Activated CD4-positive, alpha-beta memory T cell treated with anti-CD3 and anti-CD28 coated beads for 36 hours (primary cell): ENCODE measurements at regions of chr1 and their contacts with region 1.

Region 1: GRCh38 chr1:164628772-164629171 is 69.8 kb downstream of the PBX1 start:
- DNase-seq: no peak
- H3K4me3 Mint-ChIP-seq: no peak overlapping the region
- H3K27ac Mint-ChIP-seq: no peak overlapping the region
- H3K4me1 Mint-ChIP-seq: no peaks in the 10 kb centered on the region
- H3K27me3 Mint-ChIP-seq: no peaks in the 10 kb centered on the region

Region 2: DNA sequence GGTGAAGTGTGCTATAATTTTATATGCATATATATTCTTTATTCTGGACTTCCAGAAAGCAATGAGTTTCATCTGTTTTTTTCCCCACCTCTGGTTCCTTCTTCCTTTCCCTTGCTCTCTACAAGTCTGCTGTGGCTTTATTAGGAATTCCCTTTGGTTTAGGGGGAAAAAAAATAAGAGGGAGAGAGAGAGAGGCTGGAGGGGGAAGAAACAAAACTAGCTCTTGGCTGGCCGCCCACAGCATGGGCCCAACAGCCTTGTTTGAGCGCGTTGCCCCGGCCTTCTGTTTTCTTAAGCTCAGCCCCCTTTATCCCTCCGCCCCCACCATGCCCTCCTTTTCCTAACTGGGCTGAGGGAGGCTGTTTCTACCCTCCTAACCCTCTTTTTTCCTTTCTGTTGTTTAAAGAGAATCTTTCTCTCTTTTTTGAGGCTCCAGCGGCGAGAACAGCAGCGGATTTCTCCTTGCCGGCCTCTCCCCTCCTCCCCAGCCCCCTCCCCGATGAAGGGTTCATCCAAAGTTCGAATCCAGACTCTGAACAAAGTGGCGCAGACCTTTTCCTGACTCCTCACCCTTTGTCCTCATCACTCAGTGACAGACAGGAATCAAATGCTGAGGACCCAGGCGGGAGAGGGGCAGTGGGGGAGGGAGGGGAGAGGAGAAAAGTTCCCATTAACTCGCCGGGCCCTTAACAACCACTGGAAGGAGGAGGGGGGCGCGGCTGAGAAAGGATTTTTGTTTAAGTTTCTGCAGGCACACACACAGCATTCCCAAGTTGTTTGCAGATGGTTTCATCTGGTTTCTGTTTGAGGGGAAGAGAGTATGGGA is 40.0 kb before region 1 on chr1:
- CTCF ChIA-PET with region 1: no interaction called
- POLR2A ChIA-PET with region 1: no interaction called
- intact Hi-C with region 1: no loop called
- DNase-seq: no peak
- H3K4me3 Mint-ChIP-seq: no peak overlapping the region
- H3K27ac Mint-ChIP-seq: no peak overlapping the region
- H3K4me1 Mint-ChIP-seq: no peaks in the 10 kb centered on the region
- H3K27me3 Mint-ChIP-seq: no peaks in the 10 kb centered on the region

Region 3: DNA sequence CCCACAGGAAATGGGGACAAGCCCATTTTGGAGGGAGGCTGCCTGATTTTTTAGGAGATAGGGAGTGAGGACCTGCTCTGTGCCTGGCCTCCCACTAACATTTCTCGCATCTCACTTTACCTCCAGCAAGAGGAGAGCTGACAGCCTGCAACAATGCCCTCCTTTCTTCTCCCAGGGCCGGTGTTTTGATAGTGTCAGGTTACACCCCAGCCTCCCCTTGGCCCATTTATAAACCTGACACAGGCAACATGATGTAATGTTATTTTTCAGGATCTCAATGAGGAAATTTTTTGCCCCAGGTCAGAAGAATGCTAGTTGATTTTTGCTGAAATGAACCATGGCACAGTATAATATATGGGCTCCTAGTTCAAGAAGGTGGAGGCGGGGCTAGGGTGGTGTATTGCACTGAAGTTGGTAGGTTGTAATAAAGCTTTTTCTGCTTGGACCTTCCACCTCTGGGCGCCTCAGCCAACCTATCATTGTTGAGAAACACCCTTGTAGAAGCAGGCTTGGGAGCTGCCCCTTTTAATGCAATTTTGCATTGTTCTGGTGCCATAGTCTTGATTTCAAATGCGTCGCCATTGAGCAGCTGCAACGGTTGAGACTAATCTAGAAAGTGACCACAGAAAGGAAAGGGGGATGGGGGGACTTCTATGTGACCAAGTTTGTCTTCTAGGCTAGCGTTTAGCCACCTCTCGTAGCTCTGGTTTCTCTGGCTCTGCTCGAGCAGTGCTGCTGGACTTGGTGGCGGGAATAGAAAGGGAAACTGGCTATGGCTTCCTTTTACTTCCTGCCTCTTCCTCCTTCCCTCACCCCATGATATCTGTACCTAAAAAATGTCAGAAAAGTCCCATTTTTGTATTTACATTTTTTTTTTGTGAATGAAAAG is 16.8 kb before region 1 on chr1:
- CTCF ChIA-PET with region 1: no interaction called
- POLR2A ChIA-PET with region 1: no interaction called
- intact Hi-C with region 1: loop called (anchors 1 kb)
- DNase-seq: no peak
- H3K4me3 Mint-ChIP-seq: no peak overlapping the region
- H3K27ac Mint-ChIP-seq: no peak overlapping the region
- H3K4me1 Mint-ChIP-seq: no peaks in the 10 kb centered on the region
- H3K27me3 Mint-ChIP-seq: no peaks in the 10 kb centered on the region

Region 4: GRCh38 chr1:164660412-164660772 is 31.6 kb after region 1 on chr1:
- CTCF ChIA-PET with region 1: no interaction called
- POLR2A ChIA-PET with region 1: no interaction called
- intact Hi-C with region 1: no loop called
- DNase-seq: no peak
- H3K4me3 Mint-ChIP-seq: no peak overlapping the region
- H3K27ac Mint-ChIP-seq: no peak overlapping the region
- H3K4me1 Mint-ChIP-seq: no peaks in the 10 kb centered on the region
- H3K27me3 Mint-ChIP-seq: no peaks in the 10 kb centered on the region